ENCODE measurements at regions of chr4 and their contacts with region 1.

Region 1: DNA sequence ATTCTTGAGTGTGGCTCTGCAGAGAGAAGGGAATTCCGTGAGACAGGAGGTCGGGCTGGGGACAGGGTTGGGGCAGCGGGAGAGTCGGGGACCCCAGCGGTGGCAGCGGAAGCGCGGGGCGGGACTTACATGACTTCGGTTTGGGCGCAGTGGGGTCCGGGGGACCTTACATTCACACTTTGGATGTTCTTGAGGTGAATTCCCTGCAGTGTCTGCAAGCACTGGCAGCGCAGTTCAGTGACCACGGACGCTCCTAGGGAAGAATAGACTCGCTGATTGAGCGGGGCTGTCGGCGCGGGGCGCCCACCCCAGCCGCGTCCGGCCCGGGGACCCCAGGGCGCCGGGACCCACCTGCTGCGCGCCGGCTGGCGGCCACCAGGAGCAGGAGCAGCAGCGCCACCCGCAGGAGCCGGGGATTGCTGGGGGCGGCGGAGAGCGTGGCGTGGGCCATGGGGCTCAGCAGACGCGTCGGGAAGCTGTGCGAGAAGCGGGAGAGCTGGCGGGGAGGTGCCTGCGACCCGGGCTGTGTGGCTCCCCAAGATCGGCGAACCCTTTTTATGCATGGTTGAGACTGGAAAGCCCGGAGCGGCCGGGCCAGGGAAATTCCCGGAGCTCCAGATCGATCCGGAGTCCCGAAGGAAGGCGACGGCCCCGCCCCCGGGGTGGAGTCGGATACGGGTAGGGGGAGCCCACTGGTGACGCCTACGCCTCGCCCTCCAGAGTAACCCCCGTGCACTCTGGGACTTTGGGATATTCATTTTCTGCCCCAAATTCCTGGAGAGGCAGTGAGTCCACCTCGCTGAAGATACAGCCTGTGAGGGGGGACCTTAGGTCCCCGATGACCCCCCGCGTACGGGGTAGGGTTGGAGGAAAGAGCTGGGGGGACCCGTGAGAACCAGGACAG is at the start of gene CXCL3:
- H3K4me3 Mint-ChIP-seq: peak within 1 kb of the TSS; percentile 82
- H3K27ac Mint-ChIP-seq: peak within 1 kb of the TSS; percentile 86
- H3K4me1 Mint-ChIP-seq: peaks cover 41% of the 10 kb centered on the region
- H3K27me3 Mint-ChIP-seq: peaks cover 29% of the 10 kb centered on the region

Region 2: GRCh38 chr4:73152893-73153292 is 885.5 kb before region 1 on chr4:
- intact Hi-C with region 1: no loop called
- H3K4me3 Mint-ChIP-seq: no peak overlapping the region
- H3K27ac Mint-ChIP-seq: no peak overlapping the region
- H3K4me1 Mint-ChIP-seq: no peaks in the 10 kb centered on the region
- H3K27me3 Mint-ChIP-seq: no peaks in the 10 kb centered on the region

Region 3: GRCh38 chr4:73735231-73735630 is 303.2 kb before region 1 on chr4:
- intact Hi-C with region 1: loop called (anchors 5 kb)
- H3K4me3 Mint-ChIP-seq: no peak overlapping the region
- H3K27ac Mint-ChIP-seq: peak overlapping the region; percentile 34
- H3K4me1 Mint-ChIP-seq: peaks cover 37% of the 10 kb centered on the region
- H3K27me3 Mint-ChIP-seq: no peaks in the 10 kb centered on the region

Region 4: GRCh38 chr4:74098450-74098994 is 60.1 kb after region 1 on chr4:
- intact Hi-C with region 1: loop called (anchors 5 kb)
- H3K4me3 Mint-ChIP-seq: peak overlapping the region; percentile 88
- H3K27ac Mint-ChIP-seq: peak overlapping the region; percentile 90
- H3K4me1 Mint-ChIP-seq: peaks cover 34% of the 10 kb centered on the region
- H3K27me3 Mint-ChIP-seq: peaks cover 19% of the 10 kb centered on the region

Region 5: GRCh38 chr4:74167585-74167984 is 129.2 kb after region 1 on chr4:
- intact Hi-C with region 1: no loop called
- H3K4me3 Mint-ChIP-seq: no peak overlapping the region
- H3K27ac Mint-ChIP-seq: no peak overlapping the region
- H3K4me1 Mint-ChIP-seq: peaks cover 17% of the 10 kb centered on the region
- H3K27me3 Mint-ChIP-seq: no peaks in the 10 kb centered on the region

Measured in dendritic cell treated with granulocyte-macrophage colony-stimulating factor and Interleukin-4, amounts not matched to agents 40 ng/mL and 50 ng/mL, for 4 days (primary cell).